Activated CD8-positive, alpha-beta T cell treated with anti-CD3 and anti-CD28 coated beads for 36 hours (primary cell): ENCODE measurements at regions of chr5 and their contacts with region 1.

Region 1: DNA sequence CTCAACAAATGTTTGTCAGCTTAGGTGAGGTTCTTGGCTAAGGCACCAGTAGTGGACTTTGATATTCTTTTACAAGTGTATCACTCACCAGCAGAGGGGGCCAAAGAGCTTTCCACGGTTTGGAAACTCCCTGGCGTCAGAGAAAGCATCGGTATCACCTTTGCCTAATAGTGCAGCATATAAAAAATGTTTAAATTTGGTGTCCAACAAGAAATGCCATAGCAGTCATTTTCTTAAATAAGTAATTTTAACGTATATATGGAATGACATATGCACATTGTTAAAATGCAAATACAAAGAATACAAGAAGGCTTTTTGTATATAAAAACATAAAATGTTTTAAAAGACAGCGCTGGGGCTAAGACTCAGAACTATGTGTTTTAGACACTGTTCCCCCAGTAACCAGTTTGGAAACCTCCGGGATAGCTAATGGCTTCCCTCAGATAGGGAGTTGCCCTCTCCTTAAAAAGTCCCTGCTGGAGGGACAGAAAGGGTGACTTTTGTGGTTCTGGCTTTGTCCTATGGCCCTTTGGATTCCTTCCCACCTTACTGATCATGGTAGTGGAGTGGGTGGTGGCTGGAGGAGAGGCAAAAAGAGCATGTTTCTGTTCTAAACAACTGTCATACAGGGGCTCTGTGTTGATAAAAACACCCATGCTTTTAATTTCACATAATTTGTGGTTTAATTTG is 124.6 kb downstream of the GPBP1 start:
- DNase-seq: peak; percentile 91
- ATAC-seq: peak; percentile 61
- H3K4me3 Mint-ChIP-seq: peak overlapping the region; percentile 20
- H3K27ac Mint-ChIP-seq: peak overlapping the region; percentile 9
- H3K4me1 Mint-ChIP-seq: peaks cover 36% of the 10 kb centered on the region
- H3K27me3 Mint-ChIP-seq: no peaks in the 10 kb centered on the region
- CTCF ChIP-seq: peak; percentile 64

Region 2: GRCh38 chr5:57221049-57221568 is 77.3 kb before region 1 on chr5:
- CTCF ChIA-PET with region 1: no interaction called
- POLR2A ChIA-PET with region 1: no interaction called
- intact Hi-C with region 1: no loop called
- DNase-seq: no peak
- ATAC-seq: peak; percentile 79
- H3K4me3 Mint-ChIP-seq: no peak overlapping the region
- H3K27ac Mint-ChIP-seq: peak overlapping the region; percentile 67
- H3K4me1 Mint-ChIP-seq: peaks cover 49% of the 10 kb centered on the region
- H3K27me3 Mint-ChIP-seq: no peaks in the 10 kb centered on the region
- CTCF ChIP-seq: peak; percentile 96

Region 3: DNA sequence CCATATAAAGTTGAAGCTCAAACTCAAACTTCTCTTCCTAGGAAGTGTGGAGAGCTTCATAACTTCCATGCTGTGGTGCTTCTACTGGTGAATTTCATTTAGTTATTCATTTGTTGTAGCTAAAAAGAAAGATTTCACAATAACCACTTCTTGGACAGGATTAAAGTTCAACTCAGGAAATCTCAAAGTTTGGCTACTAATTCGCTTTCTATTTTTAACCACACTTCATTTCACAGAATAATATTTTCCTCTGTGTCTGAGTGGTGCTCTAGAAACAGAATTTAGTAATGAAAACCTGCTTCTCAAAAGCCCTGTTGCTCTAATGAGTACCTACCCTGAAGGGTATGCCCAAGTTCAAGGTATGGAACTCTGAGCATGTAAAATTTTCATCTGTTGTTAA is 110.3 kb after region 1 on chr5:
- CTCF ChIA-PET with region 1: interaction called, 3 read pairs
- POLR2A ChIA-PET with region 1: no interaction called
- intact Hi-C with region 1: loop called (anchors 10 kb)
- DNase-seq: no peak
- ATAC-seq: no peak
- H3K4me3 Mint-ChIP-seq: no peak overlapping the region
- H3K27ac Mint-ChIP-seq: no peak overlapping the region
- H3K4me1 Mint-ChIP-seq: no peaks in the 10 kb centered on the region
- H3K27me3 Mint-ChIP-seq: no peaks in the 10 kb centered on the region
- CTCF ChIP-seq: no peak

Region 4: GRCh38 chr5:57650360-57651069 is 352.1 kb after region 1 on chr5:
- CTCF ChIA-PET with region 1: interaction called, 14 read pairs
- POLR2A ChIA-PET with region 1: no interaction called
- intact Hi-C with region 1: no loop called
- DNase-seq: peak; percentile 21
- ATAC-seq: peak; percentile 67
- H3K4me3 Mint-ChIP-seq: no peak overlapping the region
- H3K27ac Mint-ChIP-seq: no peak overlapping the region
- H3K4me1 Mint-ChIP-seq: no peaks in the 10 kb centered on the region
- H3K27me3 Mint-ChIP-seq: peaks cover 5% of the 10 kb centered on the region
- CTCF ChIP-seq: peak; percentile 59